IMR-90 (cell line): ENCODE measurements at regions of chr20 and their contacts with region 1.

Region 1: DNA sequence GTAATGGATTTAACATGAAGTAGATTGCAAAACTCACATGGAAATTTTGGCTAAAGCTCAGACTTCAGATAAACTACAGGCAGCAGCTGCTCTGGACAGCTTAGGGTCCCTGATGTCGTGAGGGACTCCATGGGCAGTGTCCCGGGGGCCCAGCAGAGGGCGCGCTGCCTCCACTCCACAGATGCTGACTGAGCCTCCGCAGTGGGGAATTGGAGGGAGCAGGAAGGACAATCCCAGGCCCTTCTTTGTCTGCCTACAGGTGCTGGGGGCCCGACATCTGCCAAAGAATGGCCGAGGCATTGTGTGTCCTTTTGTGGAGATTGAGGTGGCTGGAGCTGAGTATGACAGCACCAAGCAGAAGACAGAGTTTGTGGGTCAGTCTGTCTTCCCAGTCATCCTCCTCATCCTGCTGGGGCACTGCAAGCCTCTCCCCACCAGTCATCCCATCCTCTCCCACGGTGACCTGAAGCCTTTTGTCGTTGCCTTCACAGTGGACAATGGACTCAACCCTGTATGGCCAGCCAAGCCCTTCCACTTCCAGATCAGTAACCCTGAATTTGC is 35.9 kb downstream of the PLCG1 start:
- DNase-seq: peak; percentile 80
- ATAC-seq: peak; percentile 70
- H3K4me3 ChIP-seq: no peak overlapping the region
- H3K27ac ChIP-seq: no peak overlapping the region; the same call in 1 of the 2 replicates
- H3K4me1 ChIP-seq: peaks cover 34% of the 10 kb centered on the region
- H3K27me3 ChIP-seq: no peaks in the 10 kb centered on the region
- CTCF ChIP-seq: peak; percentile 98
- POLR2A ChIP-seq: peak; percentile 47; the same call in 1 of the 2 replicates
- RAD21 ChIP-seq: peak; percentile 97

Region 2: GRCh38 chr20:40970201-40970600 is 203.0 kb before region 1 on chr20:
- CTCF ChIA-PET with region 1: interaction called, 3 read pairs
- POLR2A ChIA-PET with region 1: no interaction called
- dilution Hi-C with region 1: no loop called
- in situ Hi-C with region 1: no loop called
- intact Hi-C with region 1: loop called (anchors 2 kb)
- DNase-seq: no peak
- ATAC-seq: no peak
- H3K4me3 ChIP-seq: no peak overlapping the region
- H3K27ac ChIP-seq: no peak overlapping the region
- H3K4me1 ChIP-seq: peaks cover 2% of the 10 kb centered on the region; the same call in 1 of the 2 replicates
- H3K27me3 ChIP-seq: no peaks in the 10 kb centered on the region
- CTCF ChIP-seq: peak; percentile 23; the same call in 1 of the 2 replicates
- POLR2A ChIP-seq: no peak
- RAD21 ChIP-seq: no peak

Region 3: DNA sequence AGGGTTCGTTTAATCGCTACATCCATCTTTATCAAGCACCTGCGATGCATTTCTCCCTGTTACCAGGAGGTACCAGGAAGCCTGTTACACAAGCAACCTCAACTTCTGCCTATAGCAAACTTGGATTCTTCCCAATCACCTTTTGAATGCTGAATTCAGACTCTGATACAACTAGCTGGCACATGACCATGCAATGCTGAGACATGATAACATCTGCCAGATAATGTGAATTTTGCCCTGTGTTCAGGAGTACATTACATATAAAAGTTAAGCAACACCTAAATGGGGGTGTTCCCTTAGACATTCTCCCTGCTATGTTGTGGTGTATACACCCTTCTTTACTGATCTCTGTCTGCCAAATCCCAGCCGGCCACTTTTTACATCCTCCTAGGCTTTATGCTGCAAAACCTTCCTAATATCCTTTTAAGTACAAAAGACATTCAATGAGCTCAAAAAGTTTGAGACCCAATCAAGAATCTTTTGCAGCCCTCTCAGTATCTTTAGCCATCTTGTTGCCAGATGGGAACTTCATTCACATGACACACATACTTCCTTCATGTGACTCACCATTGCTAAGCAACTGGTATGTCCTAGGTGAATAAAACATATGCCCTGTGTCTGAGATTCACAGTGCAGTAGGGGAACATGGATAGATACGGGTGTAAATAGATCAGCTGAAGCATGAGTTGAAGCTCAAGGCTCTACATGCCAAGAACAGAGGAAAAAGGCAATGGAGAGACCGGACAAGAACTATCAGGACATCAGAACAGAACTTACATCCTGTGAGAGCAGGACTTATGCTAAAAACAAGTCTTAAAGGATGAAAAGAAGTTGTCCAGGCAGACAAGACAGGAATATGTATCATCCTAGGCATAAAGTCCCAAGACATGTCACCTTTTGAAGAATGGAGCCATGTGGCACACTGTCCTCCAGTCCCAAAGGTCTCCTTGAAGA is 60.0 kb after region 1 on chr20:
- CTCF ChIA-PET with region 1: interaction called, 8 read pairs
- POLR2A ChIA-PET with region 1: interaction called, 3 read pairs
- dilution Hi-C with region 1: no loop called
- in situ Hi-C with region 1: loop called (anchors 5 kb)
- intact Hi-C with region 1: loop called (anchors 1 kb)
- DNase-seq: peak; percentile 96
- ATAC-seq: peak; percentile 64
- H3K4me3 ChIP-seq: no peak overlapping the region
- H3K27ac ChIP-seq: peak overlapping the region; percentile 22; the same call in 1 of the 2 replicates
- H3K4me1 ChIP-seq: peaks cover 12% of the 10 kb centered on the region
- H3K27me3 ChIP-seq: no peaks in the 10 kb centered on the region
- CTCF ChIP-seq: no peak
- POLR2A ChIP-seq: no peak
- RAD21 ChIP-seq: no peak

Region 4: GRCh38 chr20:41339507-41340326 is 166.5 kb after region 1 on chr20:
- CTCF ChIA-PET with region 1: interaction called, 12 read pairs
- POLR2A ChIA-PET with region 1: no interaction called
- dilution Hi-C with region 1: no loop called
- in situ Hi-C with region 1: loop called (anchors 5 kb)
- intact Hi-C with region 1: loop called (anchors 1 kb)
- DNase-seq: peak; percentile 45
- ATAC-seq: peak; percentile 88
- H3K4me3 ChIP-seq: peak overlapping the region; percentile 11; the same call in 1 of the 2 replicates
- H3K27ac ChIP-seq: no peak overlapping the region
- H3K4me1 ChIP-seq: peaks cover 16% of the 10 kb centered on the region
- H3K27me3 ChIP-seq: no peaks in the 10 kb centered on the region
- CTCF ChIP-seq: peak; percentile 88
- POLR2A ChIP-seq: no peak
- RAD21 ChIP-seq: peak; percentile 98

Region 5: GRCh38 chr20:41411391-41411847 is 238.2 kb after region 1 on chr20:
- CTCF ChIA-PET with region 1: interaction called, 4 read pairs
- POLR2A ChIA-PET with region 1: no interaction called
- dilution Hi-C with region 1: no loop called
- in situ Hi-C with region 1: no loop called
- intact Hi-C with region 1: loop called (anchors 1 kb)
- DNase-seq: peak; percentile 28
- ATAC-seq: peak; percentile 51
- H3K4me3 ChIP-seq: no peak overlapping the region
- H3K27ac ChIP-seq: no peak overlapping the region
- H3K4me1 ChIP-seq: no peaks in the 10 kb centered on the region
- H3K27me3 ChIP-seq: no peaks in the 10 kb centered on the region
- CTCF ChIP-seq: peak; percentile 45
- POLR2A ChIP-seq: no peak
- RAD21 ChIP-seq: peak; percentile 57

Region 6: GRCh38 chr20:41693136-41693979 is 520.1 kb after region 1 on chr20:
- CTCF ChIA-PET with region 1: no interaction called
- POLR2A ChIA-PET with region 1: no interaction called
- dilution Hi-C with region 1: no loop called
- in situ Hi-C with region 1: no loop called
- intact Hi-C with region 1: loop called (anchors 10 kb)
- DNase-seq: peak; percentile 89
- ATAC-seq: peak; percentile 95
- H3K4me3 ChIP-seq: peak overlapping the region; percentile 72
- H3K27ac ChIP-seq: peak overlapping the region; percentile 48
- H3K4me1 ChIP-seq: no peaks in the 10 kb centered on the region
- H3K27me3 ChIP-seq: no peaks in the 10 kb centered on the region; the same call in 1 of the 2 replicates
- CTCF ChIP-seq: peak; percentile 25; the same call in 1 of the 2 replicates
- POLR2A ChIP-seq: no peak; the same call in 1 of the 2 replicates
- RAD21 ChIP-seq: no peak; the same call in 1 of the 2 replicates